PC-9 (cell line): ENCODE measurements at regions of chr7 and their contacts with region 1.

Region 1: DNA sequence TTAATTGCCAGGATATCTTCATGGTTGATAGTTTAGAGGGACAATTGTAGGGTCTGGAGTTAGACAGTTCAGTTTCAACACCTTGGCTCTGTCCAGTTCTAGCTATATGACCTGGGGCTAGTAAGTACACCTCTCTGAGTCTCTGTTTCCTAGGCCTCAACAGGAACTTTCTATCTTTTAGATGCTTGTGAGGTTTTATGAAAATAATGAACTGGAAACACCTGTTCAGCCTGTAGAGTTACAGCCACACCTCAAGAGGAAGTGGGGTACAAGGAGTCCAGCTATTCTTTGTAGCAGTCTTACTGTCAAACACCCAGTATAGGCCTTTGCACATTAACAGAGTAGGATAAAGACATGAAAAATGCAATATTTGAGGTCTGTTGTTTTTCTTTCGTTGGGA is 73.4 kb downstream of the CHRM2 start:
- DNase-seq: no peak
- H3K4me3 ChIP-seq: no peak overlapping the region
- H3K27ac ChIP-seq: no peak overlapping the region
- H3K4me1 ChIP-seq: no peaks in the 10 kb centered on the region
- H3K27me3 ChIP-seq: no peaks in the 10 kb centered on the region
- CTCF ChIP-seq: no peak

Region 2: GRCh38 chr7:137006293-137006692 is 64.5 kb after region 1 on chr7:
- CTCF ChIA-PET with region 1: no interaction called
- POLR2A ChIA-PET with region 1: no interaction called
- intact Hi-C with region 1: no loop called
- DNase-seq: no peak
- H3K4me3 ChIP-seq: no peak overlapping the region
- H3K27ac ChIP-seq: no peak overlapping the region
- H3K4me1 ChIP-seq: no peaks in the 10 kb centered on the region
- H3K27me3 ChIP-seq: no peaks in the 10 kb centered on the region
- CTCF ChIP-seq: no peak

Region 3: DNA sequence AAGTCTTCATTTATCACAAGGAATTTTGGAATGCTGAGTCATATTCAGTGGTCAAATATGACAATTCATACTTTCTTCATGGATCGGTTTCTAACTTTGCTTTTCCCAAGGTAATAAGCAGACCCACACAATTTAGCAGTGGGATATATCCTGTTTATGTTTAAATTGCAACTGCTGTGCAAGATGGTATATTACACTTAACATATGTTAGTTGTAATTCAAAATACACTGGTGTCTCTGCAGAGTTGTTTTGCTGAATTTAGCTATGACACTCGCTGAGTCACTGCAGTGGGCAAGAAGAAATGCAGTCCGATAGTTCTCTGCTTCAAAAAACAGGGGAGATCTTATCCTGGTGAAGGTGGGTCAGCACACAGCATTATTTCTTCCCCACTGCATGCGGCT is 596.5 kb after region 1 on chr7:
- CTCF ChIA-PET with region 1: interaction called, 10 read pairs
- POLR2A ChIA-PET with region 1: no interaction called
- intact Hi-C with region 1: no loop called
- DNase-seq: peak in 1 of 2 experiments; percentile 25
- H3K4me3 ChIP-seq: no peak overlapping the region
- H3K27ac ChIP-seq: no peak overlapping the region
- H3K4me1 ChIP-seq: peaks cover 4% of the 10 kb centered on the region; the same call in 1 of the 2 replicates
- H3K27me3 ChIP-seq: no peaks in the 10 kb centered on the region
- CTCF ChIP-seq: no peak

Region 4: DNA sequence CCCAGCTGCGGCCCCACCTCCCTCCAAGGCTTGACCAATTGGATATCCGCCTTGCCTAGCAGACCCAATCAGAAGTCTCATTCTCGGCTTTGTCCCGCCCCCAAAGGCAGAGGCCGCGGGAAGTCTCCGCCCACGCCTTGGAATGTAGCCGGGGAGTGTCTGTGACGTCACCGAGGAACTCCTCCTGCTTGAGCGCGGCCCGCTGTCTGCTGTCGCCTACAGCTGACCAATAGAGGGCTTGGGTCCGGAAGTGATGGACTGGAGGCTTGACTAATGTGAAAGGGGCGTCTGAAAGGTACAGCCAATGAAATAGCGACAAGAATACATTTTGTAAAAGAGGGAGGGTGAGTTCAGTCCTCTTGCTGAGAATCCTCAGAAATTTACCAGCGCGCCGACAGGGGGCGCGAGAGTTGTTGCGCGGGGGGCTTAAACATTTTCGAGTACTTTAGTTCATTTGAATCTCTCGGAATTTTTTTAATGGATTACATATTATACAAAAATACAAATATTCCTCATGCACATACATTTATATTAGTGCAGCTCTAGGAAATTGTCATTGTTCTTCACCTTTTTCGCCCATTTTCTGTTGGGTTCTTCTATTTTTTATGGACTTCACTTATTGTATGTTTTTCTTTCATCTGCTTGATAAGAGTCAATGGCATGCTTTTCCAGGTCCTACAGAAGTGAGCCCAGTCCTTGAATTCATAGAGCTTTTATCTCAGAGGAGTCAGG is 1060.4 kb after region 1 on chr7:
- CTCF ChIA-PET with region 1: no interaction called
- POLR2A ChIA-PET with region 1: no interaction called
- intact Hi-C with region 1: no loop called
- DNase-seq: peak; percentile 99 to 100
- H3K4me3 ChIP-seq: peak overlapping the region; percentile 75
- H3K27ac ChIP-seq: peak overlapping the region; percentile 58
- H3K4me1 ChIP-seq: peaks cover 33% of the 10 kb centered on the region
- H3K27me3 ChIP-seq: no peaks in the 10 kb centered on the region
- CTCF ChIP-seq: peak; percentile 99

Region 5: DNA sequence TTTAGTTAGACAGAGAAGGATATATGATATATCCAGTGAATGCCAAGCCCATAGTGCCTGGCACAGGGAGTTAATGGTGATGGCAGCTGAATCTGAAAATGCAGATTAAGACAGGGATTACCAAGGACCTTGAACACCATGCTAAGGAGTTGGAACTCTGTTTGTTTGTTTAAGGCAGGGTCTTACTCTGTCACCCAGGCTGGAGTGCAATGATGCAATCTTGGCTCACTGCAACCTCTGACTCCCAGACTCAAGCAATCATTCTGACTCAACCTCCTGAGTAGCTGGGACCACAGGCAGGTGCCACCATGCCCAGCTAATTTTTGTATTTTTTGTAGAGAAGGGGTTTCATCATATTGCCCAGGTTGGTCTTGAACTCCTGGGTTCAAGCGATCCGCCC is 1136.0 kb after region 1 on chr7:
- CTCF ChIA-PET with region 1: no interaction called
- POLR2A ChIA-PET with region 1: no interaction called
- intact Hi-C with region 1: no loop called
- DNase-seq: peak in 1 of 2 experiments; percentile 47
- H3K4me3 ChIP-seq: no peak overlapping the region
- H3K27ac ChIP-seq: peak overlapping the region; percentile 67
- H3K4me1 ChIP-seq: peaks cover 53% of the 10 kb centered on the region
- H3K27me3 ChIP-seq: no peaks in the 10 kb centered on the region
- CTCF ChIP-seq: no peak